Naive thymus-derived CD4-positive, alpha-beta T cell (primary cell): ENCODE measurements at regions of chr2 and their contacts with region 1.

Region 1: DNA sequence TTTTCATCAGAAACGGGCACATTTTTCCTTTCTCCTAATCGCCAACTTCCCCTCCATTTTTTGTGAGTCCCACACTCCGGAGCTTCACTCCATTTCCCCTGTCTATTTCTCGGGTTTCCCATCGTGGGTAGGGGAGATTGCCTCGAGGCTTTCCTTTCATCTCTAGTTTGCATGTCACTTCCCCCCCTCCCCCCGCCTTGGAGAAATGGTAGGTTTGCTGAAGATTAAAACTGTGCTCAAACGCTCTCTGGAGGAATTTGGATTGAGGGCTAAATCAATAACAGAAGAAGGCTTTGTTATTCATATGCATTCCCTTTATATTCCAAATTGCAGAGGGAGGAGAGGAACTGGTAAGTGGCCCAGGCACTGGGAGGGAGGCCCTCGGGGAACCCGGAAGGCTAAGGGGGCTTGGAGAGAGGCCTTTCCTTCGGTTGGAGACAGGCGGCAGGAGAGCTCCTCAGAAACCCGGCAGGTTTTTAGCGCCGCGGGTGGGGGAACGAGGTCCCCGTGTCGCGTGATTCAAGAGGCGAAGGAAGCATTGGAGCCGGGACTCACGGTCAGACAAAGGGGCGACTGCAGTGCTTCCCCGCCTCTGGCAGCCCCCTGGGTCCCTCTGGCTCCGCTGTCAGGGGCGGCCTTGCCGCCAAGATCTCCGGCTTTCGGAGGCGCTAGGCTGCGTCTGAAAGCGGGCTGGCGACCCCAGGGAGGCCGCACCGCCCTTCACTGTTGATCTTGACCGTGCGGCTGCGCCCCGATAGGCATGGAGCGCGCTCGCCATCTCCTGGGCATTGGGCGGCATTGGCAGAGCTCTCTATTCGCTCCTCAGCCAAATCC is 2.4 kb upstream of the HOXD12 start:
- DNase-seq: peak in 4 of 9 donors; percentile 47 to 63 (median 59)
- ATAC-seq: peak; percentile 81
- H3K4me3 ChIP-seq: peak overlapping the region; percentile 35
- H3K4me3 Mint-ChIP-seq: peak overlapping the region; percentile 72 to 86 (median 76)
- H3K27ac ChIP-seq: no peak overlapping the region
- H3K27ac Mint-ChIP-seq: peak overlapping the region in 1 of 9 donors; percentile 30
- H3K4me1 ChIP-seq: peaks cover 14 to 18% of the 10 kb centered on the region in 2 donors
- H3K4me1 Mint-ChIP-seq: peaks cover 17 to 35% (median 29%) of the 10 kb centered on the region in 7 donors
- H3K27me3 ChIP-seq: peaks cover 38 to 60% of the 10 kb centered on the region in 2 donors
- H3K27me3 Mint-ChIP-seq: peaks cover 78 to 88% (median 81%) of the 10 kb centered on the region in 5 donors

Region 2: GRCh38 chr2:175036582-175037018 is 1060.6 kb before region 1 on chr2:
- CTCF ChIA-PET with region 1: no interaction called
- POLR2A ChIA-PET with region 1: no interaction called
- intact Hi-C with region 1: loop called in 1 of 2 experiments (anchors 2 kb)
- DNase-seq: peak in 6 of 9 donors; percentile 22 to 56 (median 44)
- ATAC-seq: peak; percentile 81
- H3K4me3 ChIP-seq: no peak overlapping the region
- H3K4me3 Mint-ChIP-seq: peak overlapping the region in 9 of 10 donors; percentile 42 to 79 (median 70)
- H3K27ac ChIP-seq: no peak overlapping the region
- H3K27ac Mint-ChIP-seq: peak overlapping the region in 8 of 9 donors; percentile 49 to 91 (median 70)
- H3K4me1 ChIP-seq: no peaks in the 10 kb centered on the region
- H3K4me1 Mint-ChIP-seq: peaks cover 4 to 20% (median 14%) of the 10 kb centered on the region in 7 donors
- H3K27me3 ChIP-seq: no peaks in the 10 kb centered on the region
- H3K27me3 Mint-ChIP-seq: peaks cover 0 to 2% (median 0%) of the 10 kb centered on the region in 5 donors

Region 3: DNA sequence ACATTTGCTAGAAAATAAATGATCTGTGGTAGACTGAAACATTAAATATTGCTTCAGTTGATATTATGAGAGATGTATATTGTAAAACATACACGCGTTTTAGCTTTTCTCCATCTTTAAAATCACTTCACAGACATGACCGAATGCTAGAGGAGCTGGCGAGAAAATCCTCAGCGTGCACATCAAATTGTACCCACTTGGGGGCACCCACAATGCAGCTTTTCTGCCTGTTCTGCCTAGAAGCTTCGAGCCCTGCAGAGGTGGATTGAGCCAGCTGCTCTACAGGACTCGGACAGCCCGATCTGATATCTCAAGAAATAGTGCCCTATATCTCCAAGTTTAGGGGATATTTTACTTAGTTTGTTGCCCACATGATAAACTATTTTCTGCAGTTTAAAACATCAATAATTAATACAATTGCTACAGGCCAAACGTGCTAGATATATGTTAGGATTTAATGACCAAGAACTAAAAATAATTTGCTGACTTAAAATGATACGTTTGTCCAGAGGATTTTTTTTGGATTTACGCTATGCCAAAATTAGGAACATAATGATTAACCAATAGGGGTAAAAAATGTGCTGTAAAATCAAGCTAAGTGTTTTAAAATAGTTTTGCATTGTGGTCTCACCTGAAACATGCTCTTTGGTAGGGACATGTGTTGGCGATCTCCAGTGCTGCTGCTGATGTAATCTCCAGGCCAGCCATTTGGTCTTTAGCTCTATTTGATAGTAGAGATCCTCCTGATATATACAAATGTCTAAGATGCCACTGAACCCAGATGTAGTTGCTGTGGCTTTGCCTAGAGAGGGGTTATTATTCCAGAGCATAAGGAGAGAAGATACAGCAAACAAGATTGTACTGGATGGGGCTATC is 893.3 kb before region 1 on chr2:
- CTCF ChIA-PET with region 1: no interaction called
- POLR2A ChIA-PET with region 1: no interaction called
- intact Hi-C with region 1: loop called in 1 of 2 experiments (anchors 1 kb)
- DNase-seq: peak; percentile 9 to 61 (median 28)
- ATAC-seq: peak; percentile 85
- H3K4me3 ChIP-seq: no peak overlapping the region
- H3K4me3 Mint-ChIP-seq: peak overlapping the region in 1 of 10 donors; percentile 37
- H3K27ac ChIP-seq: no peak overlapping the region
- H3K27ac Mint-ChIP-seq: no peak overlapping the region
- H3K4me1 ChIP-seq: no peaks in the 10 kb centered on the region
- H3K4me1 Mint-ChIP-seq: peaks cover 0 to 6% (median 4%) of the 10 kb centered on the region in 7 donors
- H3K27me3 ChIP-seq: no peaks in the 10 kb centered on the region
- H3K27me3 Mint-ChIP-seq: peaks cover 6 to 35% (median 23%) of the 10 kb centered on the region in 5 donors

Region 4: DNA sequence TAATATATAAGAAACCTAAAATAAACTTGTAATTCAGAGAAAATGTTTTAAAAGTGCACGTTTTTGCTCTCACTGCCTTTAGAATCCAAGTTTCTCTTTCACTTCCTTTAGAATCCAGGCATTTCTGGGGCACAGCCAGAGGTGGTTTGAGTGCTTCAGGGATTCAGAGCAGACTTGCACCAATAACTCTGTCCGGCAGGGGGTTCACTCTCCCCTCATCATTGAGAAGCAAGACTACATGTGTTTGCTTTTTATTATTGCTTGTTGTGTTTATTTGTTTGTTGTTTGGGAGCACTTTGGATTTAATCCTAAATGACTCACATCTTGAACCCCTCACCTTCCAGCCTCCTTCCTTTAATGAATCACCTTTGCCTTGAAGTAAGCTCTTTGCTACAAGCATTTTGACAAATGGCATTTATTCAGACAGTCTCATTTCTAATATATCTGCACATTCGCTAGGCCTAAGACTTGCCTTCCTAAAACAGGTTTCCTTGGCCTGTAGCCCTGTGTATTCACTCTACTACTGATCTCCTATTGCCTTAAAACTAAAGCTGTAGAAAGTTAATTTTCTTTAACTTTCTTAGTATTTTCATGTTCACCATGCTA is 682.2 kb before region 1 on chr2:
- CTCF ChIA-PET with region 1: no interaction called
- POLR2A ChIA-PET with region 1: no interaction called
- intact Hi-C with region 1: loop called in 1 of 2 experiments (anchors 2 kb)
- DNase-seq: no peak
- ATAC-seq: peak; percentile 54
- H3K4me3 ChIP-seq: no peak overlapping the region
- H3K4me3 Mint-ChIP-seq: no peak overlapping the region
- H3K27ac ChIP-seq: no peak overlapping the region
- H3K27ac Mint-ChIP-seq: no peak overlapping the region
- H3K4me1 ChIP-seq: no peaks in the 10 kb centered on the region
- H3K4me1 Mint-ChIP-seq: no peaks in the 10 kb centered on the region
- H3K27me3 ChIP-seq: no peaks in the 10 kb centered on the region
- H3K27me3 Mint-ChIP-seq: peaks cover 0 to 13% (median 0%) of the 10 kb centered on the region in 5 donors

Region 5: GRCh38 chr2:176001916-176002687 is 95.1 kb before region 1 on chr2 and contains the start of gene LNPK:
- CTCF ChIA-PET with region 1: no interaction called
- POLR2A ChIA-PET with region 1: interaction called, 3 read pairs
- intact Hi-C with region 1: loop called in 1 of 2 experiments (anchors 1 kb)
- DNase-seq: peak; percentile 82 to 93 (median 91)
- ATAC-seq: peak; percentile 94
- H3K4me3 ChIP-seq: peak within 1 kb of the TSS; percentile 84
- H3K4me3 Mint-ChIP-seq: peak within 1 kb of the TSS; percentile 89 to 96 (median 92)
- H3K27ac ChIP-seq: peak within 1 kb of the TSS; percentile 75
- H3K27ac Mint-ChIP-seq: peak within 1 kb of the TSS; percentile 79 to 99 (median 92)
- H3K4me1 ChIP-seq: peaks cover 11 to 16% of the 10 kb centered on the region in 2 donors
- H3K4me1 Mint-ChIP-seq: peaks cover 18 to 35% (median 31%) of the 10 kb centered on the region in 7 donors
- H3K27me3 ChIP-seq: no peaks in the 10 kb centered on the region
- H3K27me3 Mint-ChIP-seq: peaks cover 0 to 9% (median 0%) of the 10 kb centered on the region in 5 donors
- total RNA-seq, gene LNPK: 19.4 to 36.8 (median 24.0) TPM

Region 6: GRCh38 chr2:177572236-177572671 is 1475.1 kb after region 1 on chr2:
- CTCF ChIA-PET with region 1: no interaction called
- POLR2A ChIA-PET with region 1: no interaction called
- intact Hi-C with region 1: no loop called
- DNase-seq: no peak
- ATAC-seq: no peak
- H3K4me3 ChIP-seq: no peak overlapping the region
- H3K4me3 Mint-ChIP-seq: no peak overlapping the region
- H3K27ac ChIP-seq: no peak overlapping the region
- H3K27ac Mint-ChIP-seq: no peak overlapping the region
- H3K4me1 ChIP-seq: no peaks in the 10 kb centered on the region
- H3K4me1 Mint-ChIP-seq: peaks cover 0 to 3% (median 0%) of the 10 kb centered on the region in 7 donors
- H3K27me3 ChIP-seq: no peaks in the 10 kb centered on the region
- H3K27me3 Mint-ChIP-seq: peaks cover 0 to 8% (median 6%) of the 10 kb centered on the region in 5 donors